MCF 10A (cell line): ENCODE measurements at regions of chr2 and their contacts with region 1.

Region 1: GRCh38 chr2:51722311-51722710 is 690.4 kb upstream of the NRXN1 start:
- DNase-seq: peak; percentile 77
- H3K4me3 Mint-ChIP-seq: no peak overlapping the region
- H3K27ac Mint-ChIP-seq: peak overlapping the region; percentile 4
- H3K4me1 Mint-ChIP-seq: peaks cover 47% of the 10 kb centered on the region
- H3K27me3 Mint-ChIP-seq: no peaks in the 10 kb centered on the region
- CTCF ChIP-seq: no peak

Region 2: DNA sequence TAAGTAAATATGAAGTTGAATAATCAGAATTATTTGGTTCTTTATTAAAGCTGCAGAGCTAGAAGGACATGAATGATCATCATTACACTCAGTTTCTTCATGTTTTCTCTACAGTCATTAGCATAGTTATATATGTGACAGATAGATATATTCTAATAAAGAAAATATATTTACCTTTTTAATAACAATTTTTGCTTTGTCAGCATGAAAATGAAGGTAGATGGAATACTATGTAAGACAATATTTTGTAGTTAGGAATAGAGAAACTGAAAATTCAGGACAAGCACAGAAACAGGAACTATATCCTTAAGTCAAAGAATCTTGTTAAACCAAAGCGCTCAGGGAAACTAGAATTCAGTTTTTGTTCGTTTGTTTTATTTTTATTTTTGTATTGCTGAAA is 40.5 kb before region 1 on chr2:
- CTCF ChIA-PET with region 1: no interaction called
- POLR2A ChIA-PET with region 1: no interaction called
- intact Hi-C with region 1: no loop called
- DNase-seq: no peak
- H3K4me3 Mint-ChIP-seq: no peak overlapping the region
- H3K27ac Mint-ChIP-seq: no peak overlapping the region
- H3K4me1 Mint-ChIP-seq: no peaks in the 10 kb centered on the region
- H3K27me3 Mint-ChIP-seq: no peaks in the 10 kb centered on the region
- CTCF ChIP-seq: no peak

Region 3: DNA sequence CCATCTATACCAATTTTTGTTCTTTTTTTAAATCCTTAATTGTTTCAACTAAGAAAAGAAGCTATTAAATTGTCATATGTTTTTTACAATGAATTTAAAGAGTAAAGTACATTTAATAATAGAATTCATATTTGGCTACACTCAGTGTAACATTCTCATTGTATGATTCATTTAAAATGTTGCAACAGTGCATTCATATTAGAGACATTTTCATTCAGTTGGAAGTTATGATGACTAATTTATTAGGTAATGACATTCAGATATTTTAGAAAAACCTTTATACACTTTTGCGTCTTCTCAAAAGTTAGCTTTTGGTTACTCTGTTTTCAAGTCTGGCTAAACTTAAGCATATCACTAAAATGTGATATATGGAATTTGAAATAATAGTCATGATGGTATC is 197.1 kb after region 1 on chr2:
- CTCF ChIA-PET with region 1: no interaction called
- POLR2A ChIA-PET with region 1: no interaction called
- intact Hi-C with region 1: loop called (anchors 2 kb)
- DNase-seq: peak; percentile 63
- H3K4me3 Mint-ChIP-seq: no peak overlapping the region
- H3K27ac Mint-ChIP-seq: no peak overlapping the region
- H3K4me1 Mint-ChIP-seq: peaks cover 3% of the 10 kb centered on the region
- H3K27me3 Mint-ChIP-seq: no peaks in the 10 kb centered on the region
- CTCF ChIP-seq: no peak